ENCODE measurements at regions of chr11 and their contacts with region 1.

Region 1: DNA sequence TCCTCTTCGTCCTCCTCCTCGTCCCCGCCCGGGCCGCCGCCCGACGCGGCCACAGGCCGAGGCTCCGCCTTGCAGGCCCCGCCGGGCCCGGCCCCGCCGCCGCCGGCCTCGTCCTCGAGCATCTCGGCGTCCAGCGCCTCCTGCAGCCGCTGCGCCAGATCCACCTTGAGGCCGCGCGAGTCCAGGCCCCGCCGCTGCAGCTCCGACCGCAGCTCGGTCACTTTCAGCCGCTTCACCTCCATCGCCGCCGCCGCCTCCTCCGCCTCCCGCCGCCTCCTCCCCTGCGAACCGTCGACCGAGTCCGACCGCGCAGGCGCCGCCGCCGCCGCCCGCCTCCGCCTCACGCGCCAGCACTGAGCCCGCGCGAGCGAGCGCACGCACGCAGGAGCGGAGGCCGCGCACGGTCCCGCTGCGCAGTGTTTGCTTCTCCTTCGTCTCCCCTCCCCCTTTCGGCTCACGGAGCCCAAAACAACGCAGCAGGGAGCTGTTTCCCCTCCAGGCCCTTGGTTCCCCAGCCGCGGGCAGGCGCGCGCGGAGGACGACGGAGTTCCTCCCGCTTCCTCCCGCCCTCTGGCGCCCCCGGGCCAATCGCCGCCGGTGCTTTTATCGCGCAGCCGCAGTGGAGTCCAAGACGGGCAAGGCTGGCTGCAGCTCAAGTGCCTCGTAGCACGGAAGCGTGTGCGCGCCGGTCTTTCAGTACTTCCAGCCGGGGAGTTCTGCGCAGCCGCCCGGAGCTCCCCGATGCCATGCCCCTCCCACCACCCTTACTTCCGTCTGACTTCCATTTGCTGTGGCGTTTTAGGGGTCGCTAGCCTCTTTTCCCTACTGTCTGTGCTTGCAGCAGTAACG is at the start of gene HNRNPUL2:
- DNase-seq: peak; percentile 98 to 99 (median 99)
- ATAC-seq: peak; percentile 92 to 96 (median 94)
- H3K4me3 ChIP-seq: peak within 1 kb of the TSS; percentile 64 to 98 (median 85)
- H3K27ac ChIP-seq: peak within 1 kb of the TSS; percentile 91 to 99 (median 96)
- H3K4me1 ChIP-seq: peaks cover 3 to 57% (median 45%) of the 10 kb centered on the region in 12 donors
- H3K27me3 ChIP-seq: no peaks in the 10 kb centered on the region
- CTCF ChIP-seq: peak in 3 of 12 donors; percentile 4 to 22 (median 16)
- POLR2A ChIP-seq: peak; percentile 81 to 94
- total RNA-seq, gene HNRNPUL2: 9.6 to 39.5 (median 32.6) TPM

Region 2: GRCh38 chr11:62705880-62706849 is 21.0 kb before region 1 on chr11:
- intact Hi-C with region 1: loop called in 4 of 10 experiments (anchors 1 to 2 kb)
- DNase-seq: peak; percentile 94 to 98 (median 96)
- ATAC-seq: peak; percentile 65 to 90 (median 86)
- H3K4me3 ChIP-seq: peak overlapping the region; percentile 63 to 89 (median 78)
- H3K27ac ChIP-seq: peak overlapping the region; percentile 71 to 95 (median 88)
- H3K4me1 ChIP-seq: peaks cover 0 to 61% (median 34%) of the 10 kb centered on the region in 12 donors
- H3K27me3 ChIP-seq: no peaks in the 10 kb centered on the region
- CTCF ChIP-seq: no peak
- POLR2A ChIP-seq: peak in 1 of 2 donors; percentile 60

Region 3: DNA sequence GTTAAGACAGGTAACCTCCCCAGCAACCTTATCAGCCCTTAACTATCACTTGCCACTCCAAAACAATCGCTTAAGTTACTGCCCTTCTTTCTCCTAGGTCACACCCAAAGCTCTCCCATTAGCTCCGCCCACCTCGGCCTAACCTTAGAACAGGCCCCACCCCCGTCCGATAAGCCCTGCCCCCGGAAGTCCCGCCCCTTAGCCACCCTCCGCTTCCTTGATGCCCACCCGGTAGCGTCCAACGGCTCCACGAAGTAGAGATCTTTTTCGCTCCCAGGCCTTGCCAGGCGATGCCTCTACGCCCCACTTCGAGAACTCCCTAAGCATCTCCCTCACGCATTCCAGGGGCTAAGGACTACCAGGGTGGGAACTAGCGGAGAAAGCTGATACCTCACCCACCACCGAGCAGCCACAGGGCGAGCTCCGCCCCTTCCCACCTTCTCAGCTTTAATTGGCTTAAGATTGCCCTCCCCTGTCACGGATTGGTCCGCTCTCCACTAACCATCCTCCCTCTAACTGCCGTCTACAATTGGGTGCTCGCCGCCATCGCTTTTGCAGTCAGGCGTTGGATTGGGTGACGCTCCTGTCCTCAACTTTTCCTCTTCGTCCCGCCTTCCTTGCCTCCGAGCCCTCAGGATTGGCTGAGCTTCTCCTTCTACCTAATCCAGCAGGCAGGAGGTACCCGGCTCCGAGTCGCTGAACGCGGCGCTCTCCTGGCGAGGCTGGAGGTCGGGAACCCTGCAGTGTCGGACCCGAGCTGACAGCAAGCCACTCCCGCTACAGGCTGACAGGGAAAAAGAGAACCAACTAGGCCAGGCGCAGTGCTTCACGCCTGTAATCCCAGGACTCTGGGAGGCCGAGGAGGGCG is 26.8 kb after region 1 on chr11 and contains the start of gene ZBTB3:
- intact Hi-C with region 1: loop called in 2 of 10 experiments (anchors 1 to 2 kb)
- DNase-seq: peak; percentile 96 to 99 (median 99)
- ATAC-seq: peak; percentile 97 to 98 (median 98)
- H3K4me3 ChIP-seq: peak within 1 kb of the TSS; percentile 21 to 86 (median 71)
- H3K27ac ChIP-seq: peak within 1 kb of the TSS; percentile 85 to 97 (median 94)
- H3K4me1 ChIP-seq: peaks cover 3 to 43% (median 16%) of the 10 kb centered on the region in 12 donors
- H3K27me3 ChIP-seq: no peaks in the 10 kb centered on the region
- CTCF ChIP-seq: peak in 1 of 12 donors; percentile 13
- POLR2A ChIP-seq: peak in 1 of 2 donors; percentile 74
- total RNA-seq, gene ZBTB3: 6.9 to 16.6 (median 9.9) TPM

Region 4: DNA sequence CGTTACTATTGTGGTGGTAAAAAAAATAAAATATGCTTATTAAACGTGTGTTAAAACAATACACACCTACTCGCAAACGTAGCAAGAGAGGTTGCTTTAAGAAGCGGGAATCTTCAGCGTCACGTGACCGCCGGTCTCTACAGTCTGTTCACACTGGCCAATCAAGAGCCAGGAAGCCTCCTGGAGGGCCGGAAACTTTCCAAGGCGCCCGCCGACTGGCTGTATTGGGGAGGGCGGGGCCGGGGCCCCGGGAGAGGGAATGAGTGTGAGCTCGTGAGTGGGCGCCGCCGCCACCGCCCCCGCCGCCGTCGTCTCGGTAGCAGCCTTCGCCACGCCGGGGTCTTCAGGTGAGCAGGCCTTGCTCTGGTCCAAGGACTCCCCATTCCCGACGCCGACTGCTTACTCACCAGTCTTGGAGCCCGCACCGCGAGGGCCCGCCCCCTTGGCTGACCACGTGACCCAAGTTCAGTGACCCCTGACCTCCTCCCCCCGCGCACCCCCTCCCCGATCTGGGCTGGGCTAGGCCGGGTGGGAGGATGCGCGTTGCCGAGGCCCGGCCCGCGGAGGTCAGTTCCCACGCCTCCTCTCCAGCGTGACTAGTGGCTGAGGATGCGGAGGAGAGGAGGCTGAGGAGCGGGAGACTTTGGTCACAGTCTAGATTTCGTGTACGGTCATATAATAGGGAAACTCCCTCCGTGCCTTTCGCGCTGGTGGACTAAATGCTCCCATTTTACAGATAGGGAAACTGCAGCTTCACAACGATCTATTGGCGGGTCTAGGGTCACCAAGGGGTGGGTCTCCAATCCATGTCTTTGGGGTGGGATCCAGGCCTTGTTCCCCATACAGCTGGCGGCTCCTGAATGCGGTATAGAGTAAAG is 44.2 kb after region 1 on chr11 and contains the start of gene TAF6L:
- intact Hi-C with region 1: loop called in 3 of 10 experiments (anchors 2 to 5 kb)
- DNase-seq: peak; percentile 98 to 100 (median 99)
- ATAC-seq: peak; percentile 94 to 98 (median 98)
- H3K4me3 ChIP-seq: peak within 1 kb of the TSS; percentile 52 to 86 (median 74)
- H3K27ac ChIP-seq: peak within 1 kb of the TSS; percentile 84 to 96 (median 93)
- H3K4me1 ChIP-seq: peaks cover 0 to 27% (median 19%) of the 10 kb centered on the region in 12 donors
- H3K27me3 ChIP-seq: no peaks in the 10 kb centered on the region
- CTCF ChIP-seq: no peak
- POLR2A ChIP-seq: peak in 1 of 2 donors; percentile 27
- total RNA-seq, gene TAF6L: 7.1 to 19.5 (median 9.3) TPM

Region 5: DNA sequence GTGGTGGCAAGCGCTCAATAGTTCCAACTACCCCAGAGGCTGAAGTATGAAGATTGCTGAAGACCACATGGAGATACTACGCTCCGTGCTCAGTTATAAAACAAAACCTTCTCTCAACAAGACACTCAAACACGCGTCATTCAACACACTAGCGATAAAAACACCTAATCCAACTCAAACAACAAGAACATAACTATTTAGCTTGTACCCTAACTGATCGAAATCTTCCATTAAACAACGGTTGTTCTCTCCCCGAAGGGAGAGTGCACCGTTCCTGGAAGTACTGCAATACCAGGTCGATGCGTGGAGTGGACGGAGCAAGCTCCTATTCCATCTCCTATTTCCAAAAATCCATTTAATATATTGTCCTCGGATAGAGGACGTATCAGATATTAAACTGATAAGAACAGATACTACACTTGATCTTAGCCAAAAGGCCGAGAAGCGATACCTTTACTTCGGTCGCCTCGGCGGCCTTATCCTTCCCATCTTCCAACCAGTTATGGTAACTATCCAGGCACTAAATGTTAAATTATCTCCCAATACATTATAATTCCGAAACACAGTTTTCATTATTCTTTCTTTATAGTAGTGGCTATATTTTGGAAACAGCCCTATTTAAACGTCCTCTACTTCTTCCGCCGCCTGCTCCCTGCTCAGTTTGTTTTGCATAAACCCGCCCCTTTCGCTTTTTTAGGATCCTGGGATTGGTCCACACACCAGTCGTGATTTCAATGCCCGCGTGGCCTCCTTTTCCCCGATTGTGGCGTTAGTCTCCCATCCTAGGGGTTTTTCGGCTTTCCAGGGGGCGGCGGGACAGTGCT is 114.4 kb after region 1 on chr11:
- intact Hi-C with region 1: loop called in 2 of 10 experiments (anchors 5 to 10 kb)
- DNase-seq: peak; percentile 85 to 93 (median 88)
- ATAC-seq: peak; percentile 73 to 86 (median 77)
- H3K4me3 ChIP-seq: peak overlapping the region in 11 of 12 donors; percentile 38 to 98 (median 86)
- H3K27ac ChIP-seq: peak overlapping the region; percentile 82 to 99 (median 96)
- H3K4me1 ChIP-seq: peaks cover 5 to 33% (median 17%) of the 10 kb centered on the region in 12 donors
- H3K27me3 ChIP-seq: no peaks in the 10 kb centered on the region
- CTCF ChIP-seq: peak in 1 of 12 donors; percentile 2
- POLR2A ChIP-seq: peak; percentile 50 to 96

Region 6: GRCh38 chr11:62855571-62856332 is 128.6 kb after region 1 on chr11:
- intact Hi-C with region 1: loop called in 1 of 10 experiments (anchors 10 kb)
- DNase-seq: peak; percentile 96 to 97 (median 96)
- ATAC-seq: peak; percentile 98 to 99 (median 98)
- H3K4me3 ChIP-seq: peak overlapping the region; percentile 61 to 94 (median 76)
- H3K27ac ChIP-seq: peak overlapping the region; percentile 38 to 88 (median 80)
- H3K4me1 ChIP-seq: peaks cover 5 to 54% (median 25%) of the 10 kb centered on the region in 12 donors
- H3K27me3 ChIP-seq: no peaks in the 10 kb centered on the region
- CTCF ChIP-seq: peak in 1 of 12 donors; percentile 18
- POLR2A ChIP-seq: peak; percentile 79 to 97

Measured in heart left ventricle (tissue), 16 donors.